Activated CD4-positive, alpha-beta T cell treated with anti-CD3 and anti-CD28 coated beads, Interleukin-2, amount 10 ng/mL, durations not matched to agents 24 days and 14 days (primary cell): ENCODE measurements at regions of chr6 and their contacts with region 1.

Region 1: DNA sequence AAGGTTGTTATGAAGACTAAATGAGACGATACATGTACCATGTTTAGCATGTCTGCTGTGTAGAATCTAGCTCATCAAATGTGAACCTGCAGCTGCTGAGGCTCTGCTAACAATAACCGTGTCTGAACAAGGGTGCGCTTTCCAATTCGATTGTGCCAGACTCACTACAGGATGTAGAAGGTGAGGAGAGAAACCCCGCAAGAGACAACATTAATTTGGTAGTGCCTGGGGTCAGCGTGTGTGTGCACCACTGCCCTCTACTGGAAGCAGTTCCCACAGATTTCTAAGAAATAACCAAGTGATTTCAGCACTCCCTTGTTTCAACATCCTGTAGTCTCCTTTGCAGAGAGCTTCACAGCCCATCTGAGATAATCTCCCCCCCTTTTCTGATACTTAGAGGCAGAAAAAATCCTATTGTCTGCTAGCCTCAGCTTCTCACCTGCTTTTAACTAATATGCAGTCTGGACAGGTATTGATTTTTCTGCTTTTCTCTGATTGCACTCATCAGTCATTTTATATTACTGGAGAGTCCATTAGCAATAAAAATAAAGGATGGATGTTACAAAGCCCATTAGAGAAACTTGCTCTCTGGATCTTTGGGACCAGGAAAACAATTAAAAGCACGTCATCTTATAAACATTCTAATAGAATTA is 96.7 kb upstream of the BACH2 start:
- DNase-seq: peak; percentile 93
- H3K4me3 Mint-ChIP-seq: no peak overlapping the region
- H3K27ac Mint-ChIP-seq: peak overlapping the region; percentile 35
- H3K4me1 Mint-ChIP-seq: peaks cover 60% of the 10 kb centered on the region
- H3K27me3 Mint-ChIP-seq: no peaks in the 10 kb centered on the region

Region 2: GRCh38 chr6:89940225-89941027 is 452.9 kb before region 1 on chr6:
- intact Hi-C with region 1: loop called (anchors 2 kb)
- DNase-seq: peak; percentile 91
- H3K4me3 Mint-ChIP-seq: no peak overlapping the region
- H3K27ac Mint-ChIP-seq: peak overlapping the region; percentile 41
- H3K4me1 Mint-ChIP-seq: peaks cover 34% of the 10 kb centered on the region
- H3K27me3 Mint-ChIP-seq: no peaks in the 10 kb centered on the region

Region 3: GRCh38 chr6:89999154-89999553 is 394.2 kb before region 1 on chr6:
- intact Hi-C with region 1: no loop called
- DNase-seq: no peak
- H3K4me3 Mint-ChIP-seq: no peak overlapping the region
- H3K27ac Mint-ChIP-seq: no peak overlapping the region
- H3K4me1 Mint-ChIP-seq: peaks cover 21% of the 10 kb centered on the region
- H3K27me3 Mint-ChIP-seq: no peaks in the 10 kb centered on the region

Region 4: GRCh38 chr6:90197854-90198496 is 195.4 kb before region 1 on chr6:
- intact Hi-C with region 1: loop called (anchors 5 kb)
- DNase-seq: peak; percentile 58
- H3K4me3 Mint-ChIP-seq: no peak overlapping the region
- H3K27ac Mint-ChIP-seq: no peak overlapping the region
- H3K4me1 Mint-ChIP-seq: peaks cover 47% of the 10 kb centered on the region
- H3K27me3 Mint-ChIP-seq: no peaks in the 10 kb centered on the region

Region 5: GRCh38 chr6:90370493-90370959 is 22.8 kb before region 1 on chr6:
- intact Hi-C with region 1: loop called (anchors 2 kb)
- DNase-seq: peak; percentile 66
- H3K4me3 Mint-ChIP-seq: no peak overlapping the region
- H3K27ac Mint-ChIP-seq: peak overlapping the region; percentile 10
- H3K4me1 Mint-ChIP-seq: peaks cover 16% of the 10 kb centered on the region
- H3K27me3 Mint-ChIP-seq: peaks cover 3% of the 10 kb centered on the region

Region 6: GRCh38 chr6:90425161-90425641 is 31.8 kb after region 1 on chr6:
- intact Hi-C with region 1: loop called (anchors 1 kb)
- DNase-seq: peak; percentile 78
- H3K4me3 Mint-ChIP-seq: peak overlapping the region; percentile 69
- H3K27ac Mint-ChIP-seq: peak overlapping the region; percentile 91
- H3K4me1 Mint-ChIP-seq: peaks cover 24% of the 10 kb centered on the region
- H3K27me3 Mint-ChIP-seq: no peaks in the 10 kb centered on the region

Region 7: DNA sequence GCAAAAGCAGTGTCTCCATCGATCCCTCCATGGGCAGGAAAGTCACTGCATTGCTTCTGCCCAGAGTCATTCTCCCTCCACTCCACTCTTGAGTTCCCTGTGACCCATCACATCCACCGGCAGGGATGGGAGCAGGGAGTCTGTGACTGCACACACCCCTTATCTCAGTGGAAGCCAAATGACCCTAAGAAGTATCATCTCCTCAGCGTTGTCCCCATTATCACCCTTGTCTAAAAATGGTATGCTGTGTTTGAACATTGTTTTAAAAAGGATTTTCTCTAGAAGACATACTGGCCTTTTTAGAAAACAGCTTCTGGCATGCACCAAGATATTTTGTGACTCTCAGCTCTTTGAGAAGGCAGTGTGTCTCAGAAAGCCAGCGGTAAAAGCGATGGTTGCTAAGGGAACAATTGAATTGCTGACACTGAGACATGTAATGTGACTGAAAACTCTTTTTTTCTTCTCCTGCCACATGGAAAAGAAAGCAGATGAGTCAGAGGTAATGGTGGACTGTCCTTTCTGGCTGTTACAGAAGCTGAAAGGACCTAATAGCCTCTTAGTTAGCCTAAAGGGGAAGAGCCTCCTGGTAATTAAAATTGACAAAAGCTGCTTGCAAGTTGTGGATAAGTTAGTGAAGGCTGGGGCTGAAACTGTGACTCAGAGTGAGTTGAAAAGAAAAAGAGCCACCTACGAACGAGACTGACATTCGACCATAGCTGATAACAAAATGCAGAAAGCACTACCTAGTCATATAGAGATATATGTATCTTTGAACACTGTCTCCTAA is 73.0 kb after region 1 on chr6:
- intact Hi-C with region 1: loop called (anchors 2 kb)
- DNase-seq: peak; percentile 82
- H3K4me3 Mint-ChIP-seq: peak overlapping the region; percentile 46
- H3K27ac Mint-ChIP-seq: peak overlapping the region; percentile 90
- H3K4me1 Mint-ChIP-seq: peaks cover 80% of the 10 kb centered on the region
- H3K27me3 Mint-ChIP-seq: no peaks in the 10 kb centered on the region

Region 8: GRCh38 chr6:90586836-90587638 is 193.7 kb after region 1 on chr6 and contains the start of gene MAP3K7:
- intact Hi-C with region 1: loop called (anchors 10 kb)
- DNase-seq: peak; percentile 99
- H3K4me3 Mint-ChIP-seq: peak within 1 kb of the TSS; percentile 92
- H3K27ac Mint-ChIP-seq: peak within 1 kb of the TSS; percentile 98
- H3K4me1 Mint-ChIP-seq: peaks cover 37% of the 10 kb centered on the region
- H3K27me3 Mint-ChIP-seq: peaks cover 26% of the 10 kb centered on the region
- total RNA-seq, gene MAP3K7: 31.8 TPM in 2 replicates